ENCODE measurements at regions of chr15 and their contacts with region 1.

Region 1: DNA sequence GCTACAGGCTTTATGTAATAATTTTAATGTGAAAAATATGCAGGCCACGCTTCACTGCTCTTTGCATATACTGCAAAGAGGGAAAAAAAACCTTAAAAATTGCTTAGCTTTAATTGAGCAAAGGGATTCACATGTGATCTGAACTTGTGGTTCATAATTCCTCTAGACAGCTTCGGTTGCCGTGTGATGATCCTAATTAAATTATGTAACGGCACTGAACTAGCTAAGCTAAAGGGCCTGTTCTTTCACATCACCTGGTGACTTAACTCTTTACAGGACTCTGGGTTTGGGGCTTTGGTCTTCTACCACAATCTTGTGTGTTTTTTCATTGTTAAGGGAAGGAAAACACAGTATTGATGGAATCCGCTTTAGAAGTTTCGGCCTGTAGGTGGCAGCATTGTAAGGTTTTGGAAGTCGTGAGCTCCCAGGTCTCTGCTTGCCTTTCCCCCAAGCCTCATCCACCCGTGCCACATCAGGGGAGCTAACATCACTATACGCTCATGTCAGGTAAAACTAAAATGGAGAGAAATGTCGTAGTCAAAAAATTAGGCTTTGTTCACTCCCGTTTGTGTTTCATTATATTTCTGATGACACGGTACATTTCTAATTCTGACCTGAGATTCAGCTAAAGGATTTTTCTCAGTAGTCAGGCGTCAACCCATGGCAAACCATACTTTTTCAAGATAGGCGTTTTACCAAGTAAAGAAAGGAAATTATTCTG is 205.6 kb upstream of the DPH6 start:
- H3K4me3 ChIP-seq: no peak overlapping the region
- H3K27ac ChIP-seq: no peak overlapping the region
- H3K4me1 ChIP-seq: peaks cover 8% of the 10 kb centered on the region; the same call in 1 of the 2 replicates
- CTCF ChIP-seq: no peak

Region 2: DNA sequence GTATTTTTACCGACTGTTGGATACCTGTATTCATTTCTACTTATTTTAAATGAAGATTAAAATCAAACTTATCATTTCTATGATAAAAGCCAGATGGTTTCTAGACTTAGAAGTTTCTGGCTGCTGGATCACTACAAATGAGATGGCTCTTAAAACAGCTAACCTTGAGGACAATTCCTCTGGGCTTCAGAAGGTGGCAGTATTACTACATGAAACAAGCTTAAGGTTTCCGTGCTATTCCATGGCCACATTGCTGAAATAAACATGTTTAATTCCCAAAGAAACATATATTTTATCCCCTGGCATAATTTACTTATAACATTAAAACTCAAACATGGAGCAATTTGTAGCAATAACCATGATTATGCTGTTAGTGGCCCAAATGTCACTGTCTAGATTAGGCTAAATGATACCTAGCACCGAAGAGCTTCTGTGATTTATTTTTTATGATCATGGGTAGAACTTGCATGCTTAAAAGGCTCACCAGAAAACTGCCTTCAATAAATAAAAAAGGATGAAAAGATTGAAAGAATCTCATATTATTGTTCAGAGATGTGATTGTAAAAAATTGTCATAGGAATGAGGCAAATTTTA is 462.5 kb before region 1 on chr15:
- CTCF ChIA-PET with region 1: interaction called, 11 read pairs
- POLR2A ChIA-PET with region 1: no interaction called
- H3K4me3 ChIP-seq: no peak overlapping the region
- H3K27ac ChIP-seq: no peak overlapping the region
- H3K4me1 ChIP-seq: no peaks in the 10 kb centered on the region
- CTCF ChIP-seq: peak; percentile 61; the same call in 1 of the 2 replicates

Region 3: DNA sequence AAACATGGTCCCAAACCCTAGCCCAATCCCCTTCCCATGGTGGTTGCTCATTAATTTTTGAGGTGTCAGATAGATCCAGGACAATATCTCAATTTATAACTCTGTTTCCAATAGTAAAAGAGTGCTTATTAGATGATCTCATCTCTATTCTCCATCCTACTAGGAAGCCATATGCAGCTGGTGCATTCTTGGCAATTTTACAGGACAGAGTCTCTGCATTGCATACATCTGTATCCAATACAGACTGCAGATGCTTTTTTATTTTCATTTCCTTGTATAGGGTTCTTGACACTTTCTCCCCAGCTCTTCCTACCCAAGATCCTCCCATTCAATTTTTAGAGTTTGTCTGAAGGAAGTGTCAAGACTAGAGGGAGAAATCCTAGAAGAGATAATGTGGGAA is 10.8 kb before region 1 on chr15:
- CTCF ChIA-PET with region 1: interaction called, 13 read pairs
- POLR2A ChIA-PET with region 1: no interaction called
- H3K4me3 ChIP-seq: no peak overlapping the region
- H3K27ac ChIP-seq: no peak overlapping the region
- H3K4me1 ChIP-seq: no peaks in the 10 kb centered on the region
- CTCF ChIP-seq: no peak